Head of caudate nucleus (tissue), 42 donors: ENCODE measurements at regions of chrX and their contacts with region 1.

Region 1: GRCh38 chrX:109312757-109313156 is 169.1 kb downstream of the GUCY2F start:
- DNase-seq: no peak

Region 2: GRCh38 chrX:108892516-108892915 is 420.2 kb before region 1 on chrX:
- intact Hi-C with region 1: no loop called
- DNase-seq: no peak

Region 3: GRCh38 chrX:109125304-109125703 is 187.5 kb before region 1 on chrX:
- intact Hi-C with region 1: no loop called
- DNase-seq: no peak

Region 4: GRCh38 chrX:109739625-109740432 is 427.1 kb after region 1 on chrX:
- intact Hi-C with region 1: loop called (anchors 10 kb)
- DNase-seq: no peak